ENCODE measurements at regions of chr10 and their contacts with region 1.

Region 1: DNA sequence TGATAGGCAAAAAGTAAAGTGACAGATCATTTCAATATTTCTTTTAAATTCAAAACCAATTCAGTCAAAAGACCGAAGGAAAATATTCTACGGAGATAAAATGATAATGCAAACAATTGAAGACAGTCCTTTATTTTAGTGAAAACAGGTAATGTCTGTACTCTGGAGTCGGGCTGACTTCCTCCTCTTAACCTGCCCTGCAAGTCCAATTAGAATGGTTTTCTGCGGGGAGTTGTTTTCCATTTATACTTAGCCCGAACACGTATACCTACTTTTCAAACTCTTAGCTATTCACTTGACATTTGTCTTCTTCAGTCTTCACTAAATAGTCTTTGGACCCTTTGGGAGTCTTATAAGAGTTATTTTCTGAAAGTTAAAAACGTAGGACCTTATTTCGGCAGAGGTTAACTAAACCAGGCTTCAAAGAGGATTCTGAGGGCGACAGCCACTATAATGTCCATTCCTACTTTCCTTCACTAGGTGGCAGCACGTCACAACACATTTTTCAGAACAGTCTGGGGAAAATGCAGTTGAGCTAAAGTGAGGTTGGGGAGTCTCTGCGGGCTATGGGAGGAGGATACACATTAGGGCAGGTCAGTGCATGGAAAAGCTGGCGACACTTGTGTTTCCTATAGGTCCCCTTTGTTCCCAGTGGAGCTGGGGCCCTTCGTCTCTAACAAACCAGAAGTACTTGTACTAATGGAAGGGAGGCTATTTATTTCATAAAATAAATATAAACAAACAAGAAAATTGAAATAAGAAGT is 472.0 kb downstream of the KCNMA1 start:
- DNase-seq: peak; percentile 100
- ATAC-seq: peak; percentile 16
- H3K4me3 ChIP-seq: peak overlapping the region; percentile 43
- H3K27ac ChIP-seq: no peak overlapping the region; the same call in 1 of the 2 replicates
- H3K4me1 ChIP-seq: peaks cover 32% of the 10 kb centered on the region
- H3K27me3 ChIP-seq: no peaks in the 10 kb centered on the region
- CTCF ChIP-seq: no peak

Region 2: GRCh38 chr10:77011874-77012811 is 153.5 kb before region 1 on chr10:
- CTCF ChIA-PET with region 1: no interaction called
- POLR2A ChIA-PET with region 1: no interaction called
- intact Hi-C with region 1: loop called (anchors 5 kb)
- DNase-seq: no peak
- ATAC-seq: no peak
- H3K4me3 ChIP-seq: no peak overlapping the region
- H3K27ac ChIP-seq: no peak overlapping the region
- H3K4me1 ChIP-seq: peaks cover 15% of the 10 kb centered on the region
- H3K27me3 ChIP-seq: no peaks in the 10 kb centered on the region
- CTCF ChIP-seq: no peak

Region 3: GRCh38 chr10:77027576-77027975 is 138.1 kb before region 1 on chr10:
- CTCF ChIA-PET with region 1: no interaction called
- POLR2A ChIA-PET with region 1: no interaction called
- intact Hi-C with region 1: no loop called
- DNase-seq: no peak
- ATAC-seq: no peak
- H3K4me3 ChIP-seq: no peak overlapping the region
- H3K27ac ChIP-seq: no peak overlapping the region
- H3K4me1 ChIP-seq: no peaks in the 10 kb centered on the region
- H3K27me3 ChIP-seq: no peaks in the 10 kb centered on the region
- CTCF ChIP-seq: no peak

Region 4: DNA sequence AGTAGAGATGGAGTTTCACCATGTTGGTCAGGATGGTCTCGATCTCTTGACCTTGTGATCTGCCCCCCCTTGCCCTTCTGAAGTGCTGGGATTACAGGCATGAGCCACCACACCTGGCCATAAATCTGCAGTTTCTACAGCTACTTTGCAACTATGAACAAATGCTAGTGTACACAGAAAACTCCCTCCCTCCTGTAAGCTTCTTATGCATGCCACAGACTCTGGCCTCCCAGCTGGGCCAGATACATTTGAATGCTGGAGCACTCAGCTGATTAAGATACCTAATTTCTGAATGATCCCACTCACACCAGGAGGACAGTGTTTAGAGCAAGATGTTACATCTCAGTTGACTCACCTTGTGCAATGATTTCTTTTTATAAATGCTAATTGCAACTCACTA is 14.2 kb before region 1 on chr10:
- CTCF ChIA-PET with region 1: interaction called, 6 read pairs
- POLR2A ChIA-PET with region 1: interaction called, 21 read pairs
- intact Hi-C with region 1: no loop called
- DNase-seq: no peak
- ATAC-seq: no peak
- H3K4me3 ChIP-seq: no peak overlapping the region
- H3K27ac ChIP-seq: no peak overlapping the region
- H3K4me1 ChIP-seq: peaks cover 25% of the 10 kb centered on the region
- H3K27me3 ChIP-seq: no peaks in the 10 kb centered on the region
- CTCF ChIP-seq: no peak

Region 5: GRCh38 chr10:77212632-77213031 is 47.0 kb after region 1 on chr10:
- CTCF ChIA-PET with region 1: no interaction called
- POLR2A ChIA-PET with region 1: no interaction called
- intact Hi-C with region 1: no loop called
- DNase-seq: no peak
- ATAC-seq: no peak
- H3K4me3 ChIP-seq: no peak overlapping the region
- H3K27ac ChIP-seq: no peak overlapping the region
- H3K4me1 ChIP-seq: no peaks in the 10 kb centered on the region
- H3K27me3 ChIP-seq: no peaks in the 10 kb centered on the region
- CTCF ChIP-seq: no peak

Region 6: DNA sequence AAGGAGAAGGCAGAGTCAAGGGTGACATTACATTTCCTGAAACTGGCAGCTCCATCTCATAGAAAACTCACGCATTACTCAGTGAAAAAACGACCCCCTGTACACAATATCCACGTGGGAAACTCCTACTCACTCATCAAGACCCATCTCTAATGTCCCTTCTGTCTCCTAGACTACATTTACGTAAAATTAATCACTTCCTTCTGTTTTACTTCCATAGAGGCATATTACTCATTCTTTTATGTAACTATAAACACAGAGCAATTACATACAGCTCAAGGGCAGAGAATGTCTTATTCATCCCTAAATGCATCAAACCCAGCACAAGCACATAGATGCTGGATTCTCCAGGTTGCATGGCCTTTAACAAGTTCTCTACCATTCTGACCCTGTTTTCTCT is 190.2 kb after region 1 on chr10:
- CTCF ChIA-PET with region 1: interaction called, 14 read pairs
- POLR2A ChIA-PET with region 1: interaction called, 4 read pairs
- intact Hi-C with region 1: loop called (anchors 2 kb)
- DNase-seq: peak; percentile 100
- ATAC-seq: peak; percentile 83
- H3K4me3 ChIP-seq: no peak overlapping the region
- H3K27ac ChIP-seq: peak overlapping the region; percentile 86
- H3K4me1 ChIP-seq: peaks cover 60% of the 10 kb centered on the region
- H3K27me3 ChIP-seq: no peaks in the 10 kb centered on the region
- CTCF ChIP-seq: no peak

Region 7: DNA sequence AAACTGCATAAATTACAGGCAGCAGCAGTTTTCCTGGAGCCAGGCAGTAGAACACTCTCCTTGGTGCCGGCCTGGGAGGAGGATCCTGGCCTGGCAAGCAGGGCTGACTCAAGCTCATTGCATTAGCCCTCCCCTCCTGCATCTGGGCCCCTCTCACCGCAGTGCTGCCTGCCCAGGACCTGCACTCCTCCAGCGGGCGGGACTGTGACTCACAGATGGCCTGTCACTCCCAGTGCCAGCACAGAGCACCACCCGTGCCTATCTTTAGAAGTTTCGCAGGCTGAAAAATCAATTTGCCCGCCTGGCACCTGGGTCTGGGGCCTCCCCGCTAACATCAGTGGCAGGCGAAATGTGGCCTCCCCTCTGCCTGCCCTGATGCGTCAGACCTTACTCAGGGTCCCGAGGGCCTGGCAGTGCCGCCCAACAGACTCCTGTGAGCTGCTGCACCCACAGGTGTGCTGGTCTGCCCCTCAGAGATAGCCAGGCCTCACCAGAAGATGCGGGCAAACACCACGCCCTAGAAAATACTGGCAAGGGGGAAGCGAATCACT is 348.2 kb after region 1 on chr10:
- CTCF ChIA-PET with region 1: interaction called, 4 read pairs
- POLR2A ChIA-PET with region 1: no interaction called
- intact Hi-C with region 1: loop called (anchors 2 kb)
- DNase-seq: peak; percentile 100
- ATAC-seq: peak; percentile 91
- H3K4me3 ChIP-seq: peak overlapping the region; percentile 49
- H3K27ac ChIP-seq: peak overlapping the region; percentile 82
- H3K4me1 ChIP-seq: peaks cover 69% of the 10 kb centered on the region
- H3K27me3 ChIP-seq: no peaks in the 10 kb centered on the region
- CTCF ChIP-seq: no peak

Region 8: GRCh38 chr10:77756319-77757232 is 590.9 kb after region 1 on chr10:
- CTCF ChIA-PET with region 1: interaction called, 4 read pairs
- POLR2A ChIA-PET with region 1: no interaction called
- intact Hi-C with region 1: loop called (anchors 1 kb)
- DNase-seq: peak; percentile 98
- ATAC-seq: peak; percentile 97
- H3K4me3 ChIP-seq: no peak overlapping the region
- H3K27ac ChIP-seq: no peak overlapping the region
- H3K4me1 ChIP-seq: peaks cover 3% of the 10 kb centered on the region; the same call in 1 of the 2 replicates
- H3K27me3 ChIP-seq: no peaks in the 10 kb centered on the region
- CTCF ChIP-seq: peak; percentile 100